Mammary epithelial cell (primary cell): ENCODE measurements at regions of chr11 and their contacts with region 1.

Region 1: GRCh38 chr11:79538775-79539174 is 97.9 kb upstream of the TENM4 start:
- DNase-seq: peak; percentile 64
- H3K4me3 ChIP-seq: no peak overlapping the region
- H3K27ac ChIP-seq: no peak overlapping the region
- H3K4me1 ChIP-seq: peaks cover 17% of the 10 kb centered on the region
- H3K27me3 ChIP-seq: no peaks in the 10 kb centered on the region
- CTCF ChIP-seq: no peak

Region 2: GRCh38 chr11:79431535-79431934 is 107.2 kb before region 1 on chr11:
- CTCF ChIA-PET with region 1: no interaction called
- dilution Hi-C with region 1: no loop called
- in situ Hi-C with region 1: no loop called
- intact Hi-C with region 1: no loop called
- DNase-seq: peak; percentile 94
- H3K4me3 ChIP-seq: no peak overlapping the region
- H3K27ac ChIP-seq: peak overlapping the region; percentile 46
- H3K4me1 ChIP-seq: peaks cover 31% of the 10 kb centered on the region
- H3K27me3 ChIP-seq: no peaks in the 10 kb centered on the region
- CTCF ChIP-seq: no peak

Region 3: DNA sequence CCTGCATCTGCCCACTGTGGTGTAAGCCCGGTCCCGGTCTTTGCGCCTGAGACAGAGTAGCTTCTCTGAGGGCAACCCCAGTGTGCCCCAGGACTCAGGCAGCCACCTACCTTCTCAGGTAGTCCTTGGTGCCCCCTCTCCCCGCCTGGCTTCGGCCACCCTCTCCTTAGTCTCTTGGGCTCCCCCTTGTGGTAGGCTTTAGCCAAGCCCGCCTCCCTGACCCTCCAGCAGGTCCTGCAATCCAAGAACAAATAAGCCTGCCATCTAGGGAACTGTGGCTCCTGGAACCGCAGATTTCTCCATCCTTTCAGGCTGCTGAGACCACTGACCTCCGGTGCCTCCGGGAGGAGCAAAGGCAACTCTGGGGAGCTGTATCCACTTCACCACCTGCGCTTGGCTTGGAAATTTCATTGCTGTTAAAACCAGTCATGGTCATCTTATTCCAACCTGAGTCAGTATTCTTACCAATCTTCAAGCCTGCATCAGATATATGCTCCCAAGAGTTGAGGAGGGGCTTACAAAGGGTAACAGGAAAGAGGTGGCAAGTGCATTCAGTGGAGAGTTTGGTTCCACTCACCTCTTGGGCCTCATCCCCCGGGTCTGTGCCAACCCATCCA is 45.1 kb before region 1 on chr11:
- CTCF ChIA-PET with region 1: no interaction called
- dilution Hi-C with region 1: no loop called
- in situ Hi-C with region 1: no loop called
- intact Hi-C with region 1: no loop called
- DNase-seq: peak; percentile 50
- H3K4me3 ChIP-seq: no peak overlapping the region
- H3K27ac ChIP-seq: no peak overlapping the region
- H3K4me1 ChIP-seq: no peaks in the 10 kb centered on the region
- H3K27me3 ChIP-seq: no peaks in the 10 kb centered on the region
- CTCF ChIP-seq: peak; percentile 85 to 97

Region 4: DNA sequence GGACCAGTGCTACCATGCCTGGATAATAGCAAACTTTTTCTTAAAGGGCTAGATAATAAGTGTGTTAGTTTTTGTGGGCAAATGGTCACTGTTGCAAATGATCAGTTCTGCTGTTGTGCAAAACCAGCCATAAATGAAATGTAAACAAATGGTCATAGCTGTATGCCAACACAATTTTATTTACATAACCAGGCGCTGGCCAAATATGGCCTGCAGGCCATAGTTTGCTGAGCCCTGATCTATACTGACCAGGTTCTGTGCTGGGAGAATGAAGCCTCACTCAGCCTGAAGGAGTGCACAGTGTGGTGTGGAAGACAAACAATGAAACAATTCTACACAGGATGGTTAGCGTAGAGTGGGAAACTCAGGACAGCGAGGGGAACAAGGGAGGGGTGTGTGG is 27.2 kb after region 1 on chr11:
- CTCF ChIA-PET with region 1: no interaction called
- dilution Hi-C with region 1: loop called (anchors 5 kb)
- in situ Hi-C with region 1: no loop called
- intact Hi-C with region 1: no loop called
- DNase-seq: no peak
- H3K4me3 ChIP-seq: no peak overlapping the region
- H3K27ac ChIP-seq: no peak overlapping the region
- H3K4me1 ChIP-seq: no peaks in the 10 kb centered on the region
- H3K27me3 ChIP-seq: no peaks in the 10 kb centered on the region
- CTCF ChIP-seq: no peak

Region 5: GRCh38 chr11:79600711-79601110 is 61.9 kb after region 1 on chr11:
- CTCF ChIA-PET with region 1: no interaction called
- dilution Hi-C with region 1: no loop called
- in situ Hi-C with region 1: no loop called
- intact Hi-C with region 1: no loop called
- DNase-seq: no peak
- H3K4me3 ChIP-seq: no peak overlapping the region
- H3K27ac ChIP-seq: no peak overlapping the region
- H3K4me1 ChIP-seq: no peaks in the 10 kb centered on the region
- H3K27me3 ChIP-seq: peaks cover 7% of the 10 kb centered on the region
- CTCF ChIP-seq: no peak